Lower leg skin (tissue), 4 donors: ENCODE measurements at regions of chr4 and their contacts with region 1.

Region 1: GRCh38 chr4:122758033-122758432 is 25.5 kb downstream of the BBS12 start:
- DNase-seq: no peak
- H3K4me3 ChIP-seq: no peak overlapping the region
- CTCF ChIP-seq: no peak
- POLR2A ChIP-seq: no peak

Region 2: DNA sequence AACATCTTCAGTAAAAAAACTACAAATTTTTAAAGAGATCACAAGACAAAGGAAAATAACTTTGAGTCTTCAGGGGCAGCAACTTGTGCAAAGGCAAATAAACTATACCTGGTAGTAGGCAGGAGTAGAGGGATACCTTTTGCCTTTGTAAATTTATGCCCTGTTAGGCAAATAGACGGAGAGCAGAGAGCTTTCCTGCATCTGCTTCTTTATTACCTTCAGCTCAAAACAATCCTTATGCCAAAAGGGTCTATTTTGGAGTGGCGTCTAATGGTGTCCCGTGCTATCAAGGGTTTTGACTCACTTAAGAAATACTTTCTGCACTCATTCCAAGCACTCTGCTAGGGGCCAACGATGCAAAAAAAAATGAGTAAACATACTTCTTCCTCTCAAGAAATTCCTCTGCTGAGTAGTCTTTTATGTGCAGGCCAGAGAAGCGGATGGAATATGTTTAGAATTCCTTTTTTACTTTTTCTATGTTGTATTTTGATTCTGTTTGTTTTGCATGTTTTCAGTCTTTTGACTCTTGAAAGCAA is 1193.1 kb before region 1 on chr4:
- intact Hi-C with region 1: no loop called
- DNase-seq: no peak
- H3K4me3 ChIP-seq: no peak overlapping the region
- CTCF ChIP-seq: no peak
- POLR2A ChIP-seq: no peak

Region 3: DNA sequence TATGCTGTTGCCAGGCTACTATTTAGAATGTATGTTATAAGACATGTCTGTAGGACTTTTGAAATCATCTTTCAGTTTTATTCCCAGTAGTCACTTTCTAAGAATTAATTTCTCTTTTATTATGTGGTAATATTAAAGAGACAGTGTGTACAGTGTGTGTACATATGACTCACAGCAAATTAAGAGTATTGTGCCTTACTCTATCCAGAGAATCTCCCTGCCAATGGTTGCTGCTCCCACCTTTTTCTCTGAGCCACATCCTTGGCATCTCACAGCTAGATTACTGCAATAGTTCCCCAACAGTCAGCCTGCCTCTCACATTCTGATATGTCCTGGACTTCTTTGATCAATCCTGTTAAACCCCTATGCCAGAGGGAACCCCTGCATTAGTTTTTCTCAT is 1175.7 kb before region 1 on chr4:
- intact Hi-C with region 1: no loop called
- DNase-seq: no peak
- H3K4me3 ChIP-seq: no peak overlapping the region
- CTCF ChIP-seq: no peak
- POLR2A ChIP-seq: no peak

Region 4: DNA sequence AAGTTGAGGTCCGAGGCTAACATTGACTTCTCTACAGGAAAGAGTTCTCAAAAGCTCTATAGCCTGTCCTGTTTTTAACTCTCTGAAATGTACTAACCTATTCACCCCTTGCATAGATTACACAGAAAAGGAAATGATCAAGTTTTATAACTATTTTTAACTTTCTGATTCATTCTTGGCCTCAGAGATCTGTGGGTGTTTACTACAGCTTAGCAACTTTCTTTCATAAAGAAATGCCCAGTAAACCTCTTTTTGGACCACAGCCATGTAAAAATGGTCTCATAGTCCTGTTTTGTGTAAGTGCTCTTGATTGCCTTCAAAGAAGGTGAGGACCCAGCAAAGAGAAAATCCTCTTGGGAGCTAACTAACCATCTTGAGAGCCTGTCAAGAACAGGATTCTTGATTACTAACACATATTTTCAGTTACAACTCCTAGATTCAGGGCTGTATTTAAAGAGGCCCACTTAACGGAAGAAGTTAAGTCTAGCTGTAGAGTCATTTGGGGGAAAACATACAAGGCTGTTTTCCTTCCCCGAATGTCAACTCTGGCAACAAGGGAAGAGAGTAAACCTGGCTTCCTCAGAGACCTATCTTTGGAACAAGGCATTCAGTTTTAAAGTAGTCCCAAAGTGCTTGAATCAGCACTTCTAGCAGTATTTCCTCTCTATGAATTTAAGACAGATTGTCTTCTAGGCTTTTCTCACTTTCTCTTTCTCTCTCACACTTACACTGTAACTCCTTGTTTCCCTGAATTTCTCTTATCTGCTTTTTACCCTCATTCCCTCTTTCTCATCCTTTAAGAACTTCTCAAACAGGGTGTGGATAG is 215.4 kb before region 1 on chr4:
- intact Hi-C with region 1: no loop called
- DNase-seq: no peak
- H3K4me3 ChIP-seq: no peak overlapping the region
- CTCF ChIP-seq: no peak
- POLR2A ChIP-seq: no peak

Region 5: GRCh38 chr4:122710434-122711308 is 47.4 kb before region 1 on chr4:
- intact Hi-C with region 1: no loop called
- DNase-seq: no peak
- H3K4me3 ChIP-seq: no peak overlapping the region
- CTCF ChIP-seq: no peak
- POLR2A ChIP-seq: no peak

Region 6: DNA sequence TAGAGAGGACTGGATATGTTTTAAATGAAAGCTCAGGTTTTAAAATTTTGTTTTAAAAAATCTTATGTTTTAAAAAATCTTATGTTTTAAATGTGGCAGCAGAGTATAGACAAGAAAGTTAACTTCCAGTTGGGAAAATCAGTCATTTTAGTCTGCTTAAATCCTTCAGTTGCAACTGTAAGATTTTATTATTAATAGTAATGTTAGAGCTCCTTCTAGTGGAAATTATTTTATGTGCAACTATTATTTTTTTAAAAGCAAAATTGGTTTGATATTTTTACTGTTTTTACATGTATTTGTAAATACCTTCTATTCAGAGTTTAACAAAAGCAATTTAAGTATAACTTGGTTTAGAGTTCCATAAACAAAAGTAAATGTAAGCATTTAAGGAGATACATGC is 172.8 kb after region 1 on chr4:
- intact Hi-C with region 1: loop called (anchors 5 kb)
- DNase-seq: no peak
- H3K4me3 ChIP-seq: no peak overlapping the region
- CTCF ChIP-seq: no peak
- POLR2A ChIP-seq: no peak